MCF 10A (cell line): ENCODE measurements at regions of chr3 and their contacts with region 1.

Region 1: DNA sequence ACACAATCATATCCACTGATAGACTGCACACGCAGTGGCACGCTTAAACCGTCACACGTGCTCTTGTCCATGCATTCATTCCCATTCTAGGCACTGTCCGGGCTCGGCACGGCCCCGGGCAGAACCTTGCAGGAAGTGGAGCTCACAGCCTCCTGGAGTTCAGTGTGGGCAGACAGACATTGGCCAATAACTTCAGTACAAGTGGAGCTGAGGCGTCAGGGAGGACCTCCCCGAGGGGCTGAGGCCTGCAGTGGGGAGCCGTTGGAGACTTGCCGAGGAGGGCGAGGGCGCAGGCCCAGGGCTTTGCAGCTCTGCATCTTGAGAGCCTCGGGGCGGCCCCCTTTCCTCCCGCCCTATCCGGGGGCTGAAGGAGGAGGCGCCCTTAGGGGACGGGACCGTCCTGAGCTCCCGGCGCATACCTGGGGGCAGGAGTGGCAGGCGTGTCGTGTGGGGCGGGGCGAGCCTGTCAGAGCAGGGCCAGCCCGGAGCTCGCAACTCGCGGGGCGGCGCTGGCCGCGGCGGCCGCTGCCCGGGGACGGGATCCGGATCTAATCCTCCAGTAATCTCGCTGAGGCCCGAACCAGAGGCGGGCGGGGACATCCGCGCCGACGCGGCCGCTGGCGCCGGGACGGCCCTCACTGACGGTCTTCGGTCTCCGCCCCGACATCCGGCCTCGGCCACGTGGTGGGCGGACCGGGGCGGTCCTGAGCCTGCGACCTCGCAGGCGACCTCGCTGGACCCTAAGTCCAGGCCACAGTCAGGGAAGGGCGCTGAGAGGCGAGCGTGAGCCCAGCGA is at the start of gene ACY1:
- DNase-seq: peak; percentile 87
- H3K4me3 Mint-ChIP-seq: peak within 1 kb of the TSS; percentile 87
- H3K27ac Mint-ChIP-seq: peak within 1 kb of the TSS; percentile 98
- H3K4me1 Mint-ChIP-seq: peaks cover 25% of the 10 kb centered on the region
- H3K27me3 Mint-ChIP-seq: no peaks in the 10 kb centered on the region
- CTCF ChIP-seq: no peak
- total RNA-seq, gene ACY1: 109 and 164 TPM in 2 replicates

Region 2: DNA sequence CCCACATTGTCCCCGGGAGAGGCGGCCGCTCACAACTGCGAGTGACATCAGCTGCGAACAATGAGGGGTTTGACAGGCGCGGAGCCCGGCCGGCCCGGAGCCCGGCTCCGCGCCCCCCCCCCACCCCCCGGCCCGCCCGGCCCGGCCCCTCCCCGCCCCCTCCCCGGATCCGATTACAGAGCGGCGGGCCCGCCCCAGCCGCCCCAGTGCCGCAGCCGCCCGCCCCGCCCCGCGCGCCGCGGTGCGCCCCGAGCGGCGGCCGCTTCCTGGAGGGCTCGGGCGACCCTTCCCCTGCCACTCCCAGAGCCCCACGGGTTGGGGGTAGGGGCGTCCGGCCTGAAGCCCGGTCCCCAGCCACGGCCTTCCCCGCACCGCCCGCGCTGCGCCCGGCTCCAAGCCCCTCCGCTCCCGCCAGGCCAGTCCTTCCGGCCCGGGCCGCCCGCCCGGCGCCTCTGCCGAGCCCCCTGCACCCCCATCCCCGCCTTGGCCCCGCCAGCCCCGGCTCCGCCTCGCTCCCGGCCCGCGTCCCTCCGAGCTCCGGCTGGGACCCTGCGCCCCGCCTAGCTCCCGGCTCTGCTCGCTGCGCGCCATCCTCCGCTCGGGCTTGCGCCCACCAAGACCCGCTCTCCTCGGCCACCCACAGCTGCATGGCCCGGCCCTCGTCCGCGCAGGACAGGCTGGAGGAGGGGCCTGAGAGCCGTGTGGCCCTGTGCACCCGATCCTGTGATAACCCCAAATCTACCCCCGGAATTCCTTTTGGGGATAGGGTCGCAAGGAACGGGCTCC is 15.4 kb before region 1 on chr3 and contains the start of gene PCBP4:
- CTCF ChIA-PET with region 1: interaction called, 27 read pairs
- POLR2A ChIA-PET with region 1: interaction called, 85 read pairs
- intact Hi-C with region 1: no loop called
- DNase-seq: no peak
- H3K4me3 Mint-ChIP-seq: peak within 1 kb of the TSS; percentile 78
- H3K27ac Mint-ChIP-seq: peak within 1 kb of the TSS; percentile 49
- H3K4me1 Mint-ChIP-seq: peaks cover 10% of the 10 kb centered on the region
- H3K27me3 Mint-ChIP-seq: no peaks in the 10 kb centered on the region
- CTCF ChIP-seq: no peak
- total RNA-seq, gene PCBP4: 26.4 TPM in 2 replicates